Mammary epithelial cell (primary cell): ENCODE measurements at regions of chr17 and their contacts with region 1.

Region 1: GRCh38 chr17:33267260-33267790 is 25.8 kb downstream of the ASIC2 start:
- DNase-seq: peak; percentile 94
- H3K4me3 ChIP-seq: no peak overlapping the region
- H3K27ac ChIP-seq: peak overlapping the region; percentile 49
- H3K4me1 ChIP-seq: peaks cover 20% of the 10 kb centered on the region
- H3K27me3 ChIP-seq: no peaks in the 10 kb centered on the region
- CTCF ChIP-seq: no peak

Region 2: DNA sequence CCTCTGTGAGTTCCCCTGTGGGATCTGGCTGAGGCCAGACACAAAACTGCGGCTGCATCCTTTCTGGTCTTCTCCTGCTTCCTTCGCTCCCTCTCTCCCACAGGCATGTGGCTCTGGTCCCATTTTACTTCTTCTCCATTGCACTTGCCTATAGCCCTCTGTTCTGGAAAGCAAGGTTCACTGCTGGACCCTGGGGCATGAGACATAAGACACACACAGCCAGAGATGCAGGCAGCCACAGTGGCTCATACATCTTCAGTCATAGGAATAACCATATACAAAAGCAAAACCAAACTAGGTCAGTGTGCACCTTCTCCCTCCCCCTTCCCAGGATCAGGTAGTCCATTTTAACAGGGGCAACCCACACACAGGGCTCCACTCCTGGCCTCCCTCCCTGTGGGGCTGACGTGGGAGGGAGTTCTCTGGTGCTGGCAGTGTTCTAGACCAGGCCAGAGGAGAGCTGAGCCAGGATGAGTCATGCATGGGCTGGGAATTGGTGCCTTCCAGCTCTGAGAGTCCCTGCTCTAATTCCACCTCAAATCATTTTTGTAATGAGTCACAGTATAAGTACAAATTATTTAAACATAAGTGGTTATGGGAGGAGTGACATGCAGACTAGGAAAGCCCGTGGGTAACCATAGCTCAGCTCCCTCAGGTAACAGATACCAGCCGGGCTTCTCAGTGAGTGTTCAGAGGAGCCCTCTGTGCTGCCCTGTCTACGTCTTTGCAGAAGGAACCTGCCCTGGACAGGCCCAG is 32.2 kb before region 1 on chr17:
- CTCF ChIA-PET with region 1: no interaction called
- dilution Hi-C with region 1: no loop called
- in situ Hi-C with region 1: no loop called
- intact Hi-C with region 1: loop called (anchors 2 kb)
- DNase-seq: peak; percentile 97
- H3K4me3 ChIP-seq: no peak overlapping the region
- H3K27ac ChIP-seq: peak overlapping the region; percentile 30
- H3K4me1 ChIP-seq: peaks cover 10% of the 10 kb centered on the region
- H3K27me3 ChIP-seq: no peaks in the 10 kb centered on the region
- CTCF ChIP-seq: no peak

Region 3: DNA sequence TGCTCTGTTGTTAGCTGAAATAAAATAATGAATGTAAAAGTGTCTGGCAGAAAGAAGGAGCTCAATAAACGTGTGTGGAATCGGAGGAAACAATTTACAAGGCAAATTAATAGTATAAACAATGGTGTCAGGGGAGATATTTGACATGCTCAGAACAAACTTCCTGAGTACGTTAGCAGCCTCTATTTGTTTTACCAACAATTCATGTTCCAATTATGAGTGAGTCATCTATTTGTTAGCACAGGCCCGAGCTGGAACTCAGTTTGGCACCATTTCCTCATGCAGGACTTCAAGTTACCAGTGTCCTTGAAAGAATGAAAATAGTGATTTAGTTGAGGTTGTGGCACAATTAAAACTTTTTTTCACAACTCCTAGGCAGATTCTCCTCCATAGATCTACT is 16.7 kb after region 1 on chr17:
- CTCF ChIA-PET with region 1: no interaction called
- dilution Hi-C with region 1: no loop called
- in situ Hi-C with region 1: no loop called
- intact Hi-C with region 1: loop called (anchors 2 kb)
- DNase-seq: peak; percentile 81
- H3K4me3 ChIP-seq: no peak overlapping the region
- H3K27ac ChIP-seq: peak overlapping the region; percentile 68
- H3K4me1 ChIP-seq: peaks cover 29% of the 10 kb centered on the region
- H3K27me3 ChIP-seq: no peaks in the 10 kb centered on the region
- CTCF ChIP-seq: no peak

Region 4: GRCh38 chr17:33310296-33310695 is 43.0 kb after region 1 on chr17:
- CTCF ChIA-PET with region 1: no interaction called
- dilution Hi-C with region 1: no loop called
- in situ Hi-C with region 1: no loop called
- intact Hi-C with region 1: no loop called
- DNase-seq: no peak
- H3K4me3 ChIP-seq: no peak overlapping the region
- H3K27ac ChIP-seq: no peak overlapping the region
- H3K4me1 ChIP-seq: no peaks in the 10 kb centered on the region
- H3K27me3 ChIP-seq: no peaks in the 10 kb centered on the region
- CTCF ChIP-seq: no peak